B cell (primary cell): ENCODE measurements at regions of chr7 and their contacts with region 1.

Region 1: GRCh38 chr7:125966278-125967048 is 1036.8 kb upstream of the POT1 start:
- DNase-seq: no peak
- ATAC-seq: no peak
- H3K4me3 ChIP-seq: no peak overlapping the region
- H3K4me3 Mint-ChIP-seq: no peak overlapping the region
- H3K27ac ChIP-seq: no peak overlapping the region
- H3K27ac Mint-ChIP-seq: no peak overlapping the region
- H3K4me1 ChIP-seq: no peaks in the 10 kb centered on the region
- H3K4me1 Mint-ChIP-seq: no peaks in the 10 kb centered on the region
- H3K27me3 ChIP-seq: no peaks in the 10 kb centered on the region
- H3K27me3 Mint-ChIP-seq: no peaks in the 10 kb centered on the region
- CTCF ChIP-seq: no peak

Region 2: DNA sequence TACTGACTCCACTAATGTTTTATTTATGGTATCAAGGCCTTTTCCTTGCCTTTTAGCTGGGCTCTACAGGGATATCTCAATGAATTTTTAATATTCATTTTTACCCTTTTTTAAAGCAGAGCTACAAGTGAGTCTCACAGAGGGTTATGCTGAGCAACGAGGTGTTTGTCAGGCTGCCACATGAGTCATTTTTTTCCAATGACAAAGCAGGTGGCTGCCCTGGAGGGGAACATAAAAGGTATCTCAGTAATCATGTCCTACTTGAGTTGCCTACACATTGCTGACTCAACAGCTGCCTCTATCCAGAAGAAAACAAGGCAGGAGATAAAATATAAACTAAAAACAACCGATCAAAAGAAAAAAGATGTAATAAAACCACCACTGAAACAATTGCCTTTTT is 31.9 kb before region 1 on chr7:
- CTCF ChIA-PET with region 1: no interaction called
- POLR2A ChIA-PET with region 1: no interaction called
- intact Hi-C with region 1: loop called (anchors 1 kb)
- DNase-seq: no peak
- ATAC-seq: no peak
- H3K4me3 ChIP-seq: no peak overlapping the region
- H3K4me3 Mint-ChIP-seq: no peak overlapping the region
- H3K27ac ChIP-seq: no peak overlapping the region
- H3K27ac Mint-ChIP-seq: no peak overlapping the region
- H3K4me1 ChIP-seq: no peaks in the 10 kb centered on the region
- H3K4me1 Mint-ChIP-seq: no peaks in the 10 kb centered on the region
- H3K27me3 ChIP-seq: no peaks in the 10 kb centered on the region
- H3K27me3 Mint-ChIP-seq: no peaks in the 10 kb centered on the region
- CTCF ChIP-seq: no peak